Testis (tissue), 5 donors: ENCODE measurements at regions of chr14 and their contacts with region 1.

Region 1: GRCh38 chr14:23120541-23121251 is 1.6 kb upstream of the CEBPE start:
- DNase-seq: peak; percentile 94
- H3K4me3 ChIP-seq: no peak overlapping the region
- H3K27ac ChIP-seq: peak overlapping the region; percentile 20 to 64
- H3K4me1 ChIP-seq: peaks cover 18% of the 10 kb centered on the region
- H3K27me3 ChIP-seq: no peaks in the 10 kb centered on the region
- CTCF ChIP-seq: peak; percentile 99 to 100 (median 100)
- POLR2A ChIP-seq: no peak

Region 2: GRCh38 chr14:22505697-22506377 is 614.9 kb before region 1 on chr14:
- intact Hi-C with region 1: no loop called
- DNase-seq: no peak
- H3K4me3 ChIP-seq: no peak overlapping the region
- H3K27ac ChIP-seq: no peak overlapping the region
- H3K4me1 ChIP-seq: peaks cover 3% of the 10 kb centered on the region
- H3K27me3 ChIP-seq: no peaks in the 10 kb centered on the region
- CTCF ChIP-seq: no peak
- POLR2A ChIP-seq: no peak

Region 3: DNA sequence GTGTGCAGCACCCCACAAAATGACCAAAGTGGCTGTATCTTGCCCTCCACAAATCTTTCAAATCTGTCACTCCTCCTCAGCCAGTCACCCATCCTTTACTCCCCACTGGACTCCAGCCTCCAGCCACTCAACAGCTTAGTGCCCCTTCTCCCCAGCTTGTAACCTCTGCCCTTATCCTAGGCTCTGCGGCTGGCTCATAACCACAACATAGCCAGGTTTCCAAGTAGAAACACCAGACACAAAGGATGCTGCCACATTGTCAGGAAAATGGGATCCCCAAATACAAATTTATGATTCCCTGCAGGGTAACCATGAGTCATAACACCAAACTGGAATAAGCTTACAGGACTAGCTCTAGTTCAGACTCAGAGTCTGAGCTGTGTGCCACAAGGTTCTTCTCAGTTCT is 339.1 kb before region 1 on chr14:
- intact Hi-C with region 1: no loop called
- DNase-seq: no peak
- H3K4me3 ChIP-seq: no peak overlapping the region
- H3K27ac ChIP-seq: no peak overlapping the region
- H3K4me1 ChIP-seq: peaks cover 6% of the 10 kb centered on the region
- H3K27me3 ChIP-seq: no peaks in the 10 kb centered on the region
- CTCF ChIP-seq: no peak
- POLR2A ChIP-seq: no peak

Region 4: GRCh38 chr14:23186913-23187654 is 66.4 kb after region 1 on chr14:
- intact Hi-C with region 1: loop called (anchors 5 kb)
- DNase-seq: peak; percentile 75
- H3K4me3 ChIP-seq: no peak overlapping the region
- H3K27ac ChIP-seq: no peak overlapping the region
- H3K4me1 ChIP-seq: peaks cover 4% of the 10 kb centered on the region
- H3K27me3 ChIP-seq: no peaks in the 10 kb centered on the region
- CTCF ChIP-seq: peak; percentile 68 to 89 (median 88)
- POLR2A ChIP-seq: no peak

Region 5: GRCh38 chr14:23327947-23328744 is 207.4 kb after region 1 on chr14:
- intact Hi-C with region 1: no loop called
- DNase-seq: peak; percentile 87
- H3K4me3 ChIP-seq: no peak overlapping the region
- H3K27ac ChIP-seq: peak overlapping the region in 1 of 2 donors; percentile 20
- H3K4me1 ChIP-seq: peaks cover 34% of the 10 kb centered on the region
- H3K27me3 ChIP-seq: no peaks in the 10 kb centered on the region
- CTCF ChIP-seq: peak; percentile 85 to 94 (median 94)
- POLR2A ChIP-seq: no peak